Activated CD4-positive, alpha-beta memory T cell treated with anti-CD3 and anti-CD28 coated beads for 36 hours (primary cell): ENCODE measurements at regions of chr20 and their contacts with region 1.

Region 1: GRCh38 chr20:49797344-49797615 is 15.3 kb upstream of the SLC9A8 start:
- DNase-seq: no peak
- H3K4me3 Mint-ChIP-seq: no peak overlapping the region
- H3K27ac Mint-ChIP-seq: no peak overlapping the region
- H3K4me1 Mint-ChIP-seq: peaks cover 21% of the 10 kb centered on the region
- H3K27me3 Mint-ChIP-seq: peaks cover 7% of the 10 kb centered on the region

Region 2: DNA sequence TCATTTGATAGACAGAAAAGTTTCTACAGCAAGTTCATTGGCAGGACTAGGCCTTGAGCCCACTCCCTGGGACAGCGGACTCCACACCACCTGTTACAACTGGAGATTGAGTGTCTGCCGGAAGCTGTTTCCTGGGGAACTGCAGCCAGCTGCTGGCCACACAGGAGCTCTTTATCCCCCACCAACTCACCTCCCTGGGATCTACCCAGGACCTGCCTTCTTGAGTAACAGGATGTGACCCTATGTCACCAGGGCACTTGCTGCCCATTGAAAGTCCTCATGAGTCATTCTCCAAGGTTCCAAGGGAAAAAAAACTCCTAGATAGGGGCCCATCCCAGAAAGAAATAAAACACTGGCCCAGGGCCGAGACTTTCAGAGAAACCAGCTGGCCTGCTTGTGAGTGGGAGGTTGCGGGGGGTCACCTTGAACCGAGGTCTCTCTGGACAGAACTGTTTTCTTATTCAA is 22.0 kb before region 1 on chr20:
- CTCF ChIA-PET with region 1: no interaction called
- POLR2A ChIA-PET with region 1: interaction called, 4 read pairs
- intact Hi-C with region 1: loop called (anchors 1 kb)
- DNase-seq: no peak
- H3K4me3 Mint-ChIP-seq: no peak overlapping the region
- H3K27ac Mint-ChIP-seq: peak overlapping the region; percentile 18
- H3K4me1 Mint-ChIP-seq: peaks cover 29% of the 10 kb centered on the region
- H3K27me3 Mint-ChIP-seq: peaks cover 22% of the 10 kb centered on the region